ENCODE measurements at regions of chr12 and their contacts with region 1.

Region 1: DNA sequence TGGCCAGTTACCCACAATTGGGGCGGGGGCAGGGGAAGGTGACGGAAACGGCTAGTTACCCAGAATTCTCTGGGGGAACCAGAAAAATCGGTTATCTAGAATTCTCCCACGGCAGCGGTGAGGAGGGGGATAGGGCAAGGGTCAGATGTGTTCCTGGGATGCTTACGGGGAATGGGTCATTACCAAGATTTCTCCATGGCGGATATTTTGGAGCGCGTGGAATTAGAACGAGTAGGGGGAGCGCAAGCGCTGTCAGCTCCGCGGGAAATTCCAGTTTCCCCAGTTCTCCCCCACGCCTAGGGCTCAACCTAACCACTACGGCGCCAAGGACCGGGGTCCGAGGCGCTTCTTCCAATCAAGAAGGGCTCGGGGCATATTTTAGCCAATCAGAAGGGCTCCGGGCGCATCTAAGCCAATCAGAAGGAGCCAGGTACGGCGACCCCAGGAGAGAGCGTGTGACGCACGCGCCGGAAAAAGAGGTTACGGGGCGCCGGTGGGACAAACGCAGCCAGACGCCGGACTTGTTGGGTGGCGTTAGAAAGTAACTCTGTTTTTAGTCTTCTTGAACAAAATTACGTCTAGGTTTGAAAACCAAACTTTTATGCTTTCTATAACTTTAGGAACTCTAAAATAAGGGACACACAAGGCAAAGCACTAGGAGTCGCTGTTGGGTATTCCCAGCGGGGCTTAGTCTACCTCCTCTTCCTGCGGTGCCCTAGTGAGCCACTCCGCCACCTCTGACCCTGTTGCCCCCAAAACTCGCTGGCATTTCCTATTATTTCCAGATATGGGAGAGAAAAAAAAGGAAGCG is at the start of gene PAN2:
- DNase-seq: peak; percentile 88 to 97 (median 96)
- H3K4me3 ChIP-seq: peak within 1 kb of the TSS; percentile 45 to 95 (median 75)
- H3K27ac ChIP-seq: peak within 1 kb of the TSS; percentile 82 to 100 (median 97)
- H3K27me3 ChIP-seq: no peaks in the 10 kb centered on the region
- CTCF ChIP-seq: peak in 54 of 56 donors; percentile 15 to 74 (median 59)
- total RNA-seq, gene PAN2: 59.4 to 269 (median 110) TPM

Region 2: DNA sequence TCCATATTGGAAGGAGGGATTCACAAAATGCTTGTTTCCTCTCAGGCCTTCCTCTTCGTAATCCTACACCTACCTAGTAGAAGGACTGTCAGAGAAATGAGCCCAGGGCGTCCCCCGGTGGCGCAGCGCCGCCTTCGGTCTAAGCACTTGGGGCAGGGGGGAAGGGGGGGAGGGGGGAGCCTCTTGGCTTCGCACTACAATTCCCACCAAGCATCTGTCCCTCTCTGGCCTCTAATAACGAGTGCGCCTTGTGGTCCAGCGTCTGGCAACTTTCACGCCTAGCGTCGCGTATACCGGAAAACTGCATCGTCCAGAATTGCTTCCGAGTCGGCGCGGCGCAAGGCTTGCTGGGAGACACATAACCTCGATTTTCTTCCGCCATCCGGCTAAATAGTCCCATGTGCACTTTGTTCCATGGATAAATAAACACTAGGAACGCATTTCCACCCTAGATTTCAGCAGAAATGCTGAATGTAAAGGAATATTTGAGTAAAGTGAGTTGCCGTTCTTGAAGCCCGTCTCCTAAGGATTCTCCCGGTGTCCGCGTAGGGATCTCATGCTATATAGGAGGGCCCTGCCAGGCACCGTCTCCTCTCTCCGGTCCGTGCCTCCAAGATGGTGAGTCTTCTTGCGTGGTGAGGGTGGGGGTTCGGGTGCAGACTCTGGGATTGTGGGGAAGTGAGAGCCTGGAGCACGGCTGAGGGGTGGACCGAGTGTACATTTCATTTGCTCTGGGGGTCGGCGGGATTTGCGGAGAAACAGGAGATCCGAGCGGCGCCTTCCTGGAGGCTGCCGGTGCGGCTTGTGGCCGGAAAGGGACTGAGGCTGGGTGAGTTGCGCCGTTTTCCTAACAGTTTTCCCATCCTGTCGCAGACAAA is 292.1 kb before region 1 on chr12 and contains the start of gene RPS26:
- intact Hi-C with region 1: no loop called
- DNase-seq: peak; percentile 81 to 96 (median 92)
- H3K4me3 ChIP-seq: peak within 1 kb of the TSS; percentile 56 to 99 (median 87)
- H3K27ac ChIP-seq: peak within 1 kb of the TSS; percentile 68 to 100 (median 97)
- H3K27me3 ChIP-seq: no peaks in the 10 kb centered on the region
- CTCF ChIP-seq: peak in 55 of 56 donors; percentile 32 to 74 (median 57)
- total RNA-seq, gene RPS26: 6.6 to 65.3 (median 18.5) TPM

Region 3: DNA sequence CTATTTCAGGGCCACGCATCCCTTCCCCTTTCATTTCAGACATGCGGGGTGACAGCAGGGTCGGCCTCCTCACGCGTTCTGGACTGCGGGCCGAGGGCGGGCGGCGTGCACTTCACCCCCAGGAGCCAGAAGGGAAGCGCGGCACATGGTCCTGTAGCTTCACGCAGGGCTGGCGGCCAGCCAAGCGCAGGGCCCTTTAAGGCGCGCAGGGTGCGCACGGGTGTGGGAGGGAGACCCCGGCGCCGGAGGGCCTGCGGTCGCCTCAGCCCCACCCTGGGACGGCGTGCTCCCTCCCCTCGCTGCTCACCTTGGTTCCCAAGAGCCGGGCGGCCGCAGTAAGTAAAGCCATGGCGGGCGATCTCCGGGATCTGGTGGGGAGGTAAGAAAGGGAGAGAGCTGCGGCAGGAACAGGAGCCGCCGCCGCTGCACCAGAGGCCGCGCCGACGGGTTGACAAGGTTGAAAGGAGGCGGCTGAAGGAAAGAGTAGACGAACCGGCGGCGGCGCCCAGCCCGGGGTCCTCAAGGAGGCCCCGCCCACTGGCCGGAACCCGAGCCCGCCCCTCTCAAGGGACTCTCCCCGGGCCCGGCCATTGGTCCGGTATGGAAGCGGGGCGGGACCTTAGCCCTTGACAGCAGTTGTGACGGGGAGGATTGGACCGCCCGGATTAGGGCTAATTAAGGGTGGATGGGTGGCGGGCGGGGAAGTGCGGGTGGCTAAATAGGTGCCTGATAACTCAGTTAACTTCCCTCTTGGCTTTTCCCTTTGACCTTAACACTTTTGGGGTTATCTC is 33.8 kb before region 1 on chr12 and contains the start of gene CS:
- intact Hi-C with region 1: loop called in 1 of 2 experiments (anchors 1 kb)
- DNase-seq: peak; percentile 96 to 99 (median 99)
- H3K4me3 ChIP-seq: peak within 1 kb of the TSS; percentile 70 to 99 (median 91)
- H3K27ac ChIP-seq: peak within 1 kb of the TSS; percentile 59 to 98 (median 91)
- H3K27me3 ChIP-seq: no peaks in the 10 kb centered on the region
- CTCF ChIP-seq: peak in 22 of 56 donors; percentile 3 to 49 (median 23)
- total RNA-seq, gene CS: 122 to 244 (median 194) TPM

Region 4: GRCh38 chr12:56315622-56316473 is 18.0 kb before region 1 on chr12 and contains the start of gene CNPY2:
- intact Hi-C with region 1: loop called in 1 of 2 experiments (anchors 2 kb)
- DNase-seq: peak; percentile 74 to 97 (median 92)
- H3K4me3 ChIP-seq: peak within 1 kb of the TSS; percentile 64 to 100 (median 92)
- H3K27ac ChIP-seq: peak within 1 kb of the TSS; percentile 67 to 100 (median 96)
- H3K27me3 ChIP-seq: no peaks in the 10 kb centered on the region
- CTCF ChIP-seq: peak in 39 of 56 donors; percentile 5 to 60 (median 25)
- total RNA-seq, gene CNPY2: 65.8 to 125 (median 92.3) TPM

Region 5: GRCh38 chr12:56359851-56360767 is 26.2 kb after region 1 on chr12 and contains the start of gene STAT2:
- intact Hi-C with region 1: loop called (anchors 1 kb)
- DNase-seq: peak; percentile 95 to 99 (median 99)
- H3K4me3 ChIP-seq: peak within 1 kb of the TSS; percentile 62 to 99 (median 86)
- H3K27ac ChIP-seq: peak within 1 kb of the TSS; percentile 48 to 99 (median 93)
- H3K27me3 ChIP-seq: no peaks in the 10 kb centered on the region
- CTCF ChIP-seq: peak in 51 of 56 donors; percentile 3 to 70 (median 40)
- total RNA-seq, gene STAT2: 94.6 to 278 (median 154) TPM

Region 6: DNA sequence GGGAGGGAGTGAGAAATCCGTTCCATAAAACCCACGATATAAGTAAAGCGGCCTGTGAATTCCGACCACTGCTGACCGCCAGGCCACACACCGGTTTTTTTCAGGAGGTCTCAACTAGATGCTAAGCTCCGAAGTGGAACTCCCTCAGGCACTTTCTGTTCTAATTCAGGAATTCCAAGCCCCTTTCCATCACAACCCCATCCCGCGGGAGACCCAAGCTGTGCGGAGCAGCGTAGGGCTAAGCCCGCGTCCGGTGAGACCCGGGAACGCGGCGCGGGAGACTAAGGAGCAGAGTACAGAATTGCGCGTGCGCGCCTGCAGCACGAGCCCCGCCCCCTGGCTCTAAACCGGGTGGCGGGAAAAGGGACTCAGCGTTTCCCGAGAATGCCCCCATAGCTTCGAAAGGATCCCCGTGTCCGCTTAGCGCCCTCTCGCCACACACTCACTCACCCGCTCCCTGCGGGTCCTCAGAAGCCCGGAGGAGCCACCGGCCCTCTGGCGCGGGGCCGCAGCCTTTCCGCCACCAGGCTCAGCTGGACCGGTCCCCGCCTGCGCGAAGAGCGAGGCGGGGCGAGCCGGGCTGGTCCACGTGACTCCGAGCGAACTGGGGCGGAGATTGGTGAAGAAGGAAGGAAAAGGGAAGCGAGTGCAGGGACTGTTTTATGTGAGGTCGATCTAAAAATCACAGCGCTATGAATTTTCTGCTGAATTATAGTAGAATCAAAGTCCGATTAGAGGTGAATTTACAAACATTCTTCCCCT is 115.2 kb after region 1 on chr12 and contains the start of gene TIMELESS:
- intact Hi-C with region 1: loop called in 1 of 2 experiments (anchors 1 kb)
- DNase-seq: peak; percentile 78 to 94 (median 87)
- H3K4me3 ChIP-seq: peak within 1 kb of the TSS; percentile 48 to 94 (median 79)
- H3K27ac ChIP-seq: peak within 1 kb of the TSS; percentile 76 to 98 (median 92)
- H3K27me3 ChIP-seq: no peaks in the 10 kb centered on the region
- CTCF ChIP-seq: peak in 43 of 56 donors; percentile 9 to 66 (median 36)
- total RNA-seq, gene TIMELESS: 1.8 to 8.2 (median 4.4) TPM

Region 7: GRCh38 chr12:56461235-56462159 is 127.6 kb after region 1 on chr12:
- intact Hi-C with region 1: loop called in 1 of 2 experiments (anchors 5 kb)
- DNase-seq: no peak
- H3K4me3 ChIP-seq: no peak overlapping the region
- H3K27ac ChIP-seq: no peak overlapping the region
- H3K27me3 ChIP-seq: no peaks in the 10 kb centered on the region
- CTCF ChIP-seq: no peak

Region 8: DNA sequence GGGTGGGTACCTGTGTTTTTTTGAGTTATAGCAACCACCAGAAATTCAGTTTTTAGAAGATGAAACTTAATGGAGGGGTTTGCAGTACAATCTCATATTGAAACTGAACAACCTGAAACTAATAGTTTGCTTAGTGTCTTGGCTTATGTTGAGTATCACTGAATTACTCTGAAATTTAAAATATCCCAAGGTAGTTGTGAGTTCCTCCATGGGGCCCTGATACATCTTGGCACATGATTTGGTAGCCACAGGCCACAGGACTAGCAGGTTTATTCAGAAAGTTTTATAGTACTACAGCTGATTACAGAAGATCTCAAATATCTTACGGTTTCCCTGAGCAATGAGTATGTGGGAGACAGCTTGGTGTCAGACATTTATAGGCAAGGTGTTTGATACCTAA is 343.8 kb after region 1 on chr12:
- intact Hi-C with region 1: no loop called
- DNase-seq: no peak
- H3K4me3 ChIP-seq: no peak overlapping the region
- H3K27ac ChIP-seq: peak overlapping the region in 1 of 59 donors; percentile 7
- H3K27me3 ChIP-seq: no peaks in the 10 kb centered on the region
- CTCF ChIP-seq: no peak